ENCODE measurements at regions of chr2 and their contacts with region 1.

Region 1: GRCh38 chr2:177212106-177212890 is at the start of gene HNRNPA3:
- DNase-seq: peak; percentile 99
- H3K4me3 Mint-ChIP-seq: peak within 1 kb of the TSS; percentile 97
- H3K27ac Mint-ChIP-seq: peak within 1 kb of the TSS; percentile 100
- H3K4me1 Mint-ChIP-seq: peaks cover 43% of the 10 kb centered on the region
- H3K27me3 Mint-ChIP-seq: no peaks in the 10 kb centered on the region
- total RNA-seq, gene HNRNPA3: 312 to 340 TPM

Region 2: GRCh38 chr2:176001916-176002687 is 1210.2 kb before region 1 on chr2 and contains the start of gene LNPK:
- CTCF ChIA-PET with region 1: no interaction called
- intact Hi-C with region 1: loop called (anchors 5 kb)
- DNase-seq: peak; percentile 93
- H3K4me3 Mint-ChIP-seq: peak within 1 kb of the TSS; percentile 88
- H3K27ac Mint-ChIP-seq: peak within 1 kb of the TSS; percentile 68
- H3K4me1 Mint-ChIP-seq: peaks cover 17% of the 10 kb centered on the region
- H3K27me3 Mint-ChIP-seq: no peaks in the 10 kb centered on the region
- total RNA-seq, gene LNPK: 22.2 to 23.9 TPM

Region 3: GRCh38 chr2:177252808-177253531 is 40.7 kb after region 1 on chr2:
- CTCF ChIA-PET with region 1: no interaction called
- intact Hi-C with region 1: loop called (anchors 1 kb)
- DNase-seq: no peak
- H3K4me3 Mint-ChIP-seq: no peak overlapping the region
- H3K27ac Mint-ChIP-seq: peak overlapping the region; percentile 88
- H3K4me1 Mint-ChIP-seq: peaks cover 88% of the 10 kb centered on the region
- H3K27me3 Mint-ChIP-seq: no peaks in the 10 kb centered on the region

Region 4: DNA sequence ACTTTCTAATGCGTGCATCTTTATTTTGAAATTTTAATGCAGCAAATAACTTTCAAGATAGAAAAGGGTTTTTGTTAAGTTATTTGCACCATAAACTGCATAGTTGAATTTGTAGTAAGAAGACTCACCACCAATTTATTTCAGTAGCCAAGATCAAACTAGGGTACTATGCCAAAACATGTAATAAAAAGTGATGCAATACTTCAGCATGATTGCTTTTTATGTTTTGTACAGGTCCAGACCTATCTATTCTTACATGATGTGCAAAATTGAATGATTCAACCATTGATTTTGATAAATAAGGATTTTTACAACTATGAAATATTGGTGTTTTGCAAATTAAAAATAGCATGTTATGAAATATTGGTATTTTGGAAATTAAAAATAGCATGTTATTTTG is 207.0 kb after region 1 on chr2:
- CTCF ChIA-PET with region 1: no interaction called
- intact Hi-C with region 1: loop called (anchors 2 kb)
- DNase-seq: no peak
- H3K4me3 Mint-ChIP-seq: no peak overlapping the region
- H3K27ac Mint-ChIP-seq: peak overlapping the region; percentile 63
- H3K4me1 Mint-ChIP-seq: peaks cover 37% of the 10 kb centered on the region
- H3K27me3 Mint-ChIP-seq: no peaks in the 10 kb centered on the region

Region 5: GRCh38 chr2:177618255-177619253 is 406.3 kb after region 1 on chr2:
- CTCF ChIA-PET with region 1: no interaction called
- intact Hi-C with region 1: loop called (anchors 1 kb)
- DNase-seq: peak; percentile 95
- H3K4me3 Mint-ChIP-seq: peak overlapping the region; percentile 93
- H3K27ac Mint-ChIP-seq: peak overlapping the region; percentile 96
- H3K4me1 Mint-ChIP-seq: peaks cover 3% of the 10 kb centered on the region
- H3K27me3 Mint-ChIP-seq: no peaks in the 10 kb centered on the region

Measured in activated naive CD4-positive, alpha-beta T cell treated with anti-CD3 and anti-CD28 coated beads for 36 hours (primary cell).